Endothelial cell of umbilical vein (primary cell): ENCODE measurements at regions of chr11 and their contacts with region 1.

Region 1: DNA sequence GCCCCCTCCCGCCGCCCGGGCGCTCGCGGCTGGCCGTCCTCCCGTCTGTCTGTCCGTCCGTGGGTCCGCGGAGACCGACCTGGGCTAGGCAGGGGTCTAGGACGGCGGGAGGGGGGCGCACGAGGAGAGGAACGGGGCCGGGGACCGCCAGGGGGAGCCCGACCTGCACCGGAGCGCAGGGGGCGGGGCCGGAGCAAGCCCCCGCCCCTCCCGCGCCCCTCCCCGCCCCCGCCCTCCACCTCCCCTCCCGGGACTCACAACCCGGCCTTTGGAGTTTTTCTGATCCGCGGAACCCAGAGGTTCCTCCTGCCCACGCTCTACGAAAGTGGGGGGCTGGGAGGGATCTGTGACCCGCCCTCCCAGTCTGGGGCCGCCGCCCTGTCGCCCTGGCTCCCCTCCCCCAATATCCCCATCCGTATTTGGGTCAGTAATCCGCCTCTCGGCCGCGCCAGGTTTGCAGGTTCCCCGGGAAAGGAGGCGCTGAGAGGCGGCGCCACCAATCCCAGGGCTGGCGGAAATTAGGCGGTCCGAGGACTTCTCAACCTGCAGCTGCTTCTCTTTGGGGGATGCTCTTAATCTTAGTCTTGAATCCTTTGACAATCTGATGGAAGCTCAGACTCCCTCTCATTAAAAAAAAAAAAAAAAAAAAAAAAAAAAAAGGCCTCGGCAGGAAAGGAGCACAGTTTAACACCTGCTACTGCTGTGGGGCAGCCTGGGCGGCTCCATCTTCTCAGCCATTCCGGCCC is 925 bp upstream of the KCNJ11 start:
- DNase-seq: peak; percentile 43
- H3K4me3 ChIP-seq: peak overlapping the region in 1 of 3 experiments; percentile 39
- H3K27ac ChIP-seq: no peak overlapping the region
- H3K4me1 ChIP-seq: no peaks in the 10 kb centered on the region
- H3K27me3 ChIP-seq: peaks cover 8 to 14% of the 10 kb centered on the region in 2 experiments
- CTCF ChIP-seq: peak; percentile 34 to 73
- POLR2A ChIP-seq: no peak

Region 2: DNA sequence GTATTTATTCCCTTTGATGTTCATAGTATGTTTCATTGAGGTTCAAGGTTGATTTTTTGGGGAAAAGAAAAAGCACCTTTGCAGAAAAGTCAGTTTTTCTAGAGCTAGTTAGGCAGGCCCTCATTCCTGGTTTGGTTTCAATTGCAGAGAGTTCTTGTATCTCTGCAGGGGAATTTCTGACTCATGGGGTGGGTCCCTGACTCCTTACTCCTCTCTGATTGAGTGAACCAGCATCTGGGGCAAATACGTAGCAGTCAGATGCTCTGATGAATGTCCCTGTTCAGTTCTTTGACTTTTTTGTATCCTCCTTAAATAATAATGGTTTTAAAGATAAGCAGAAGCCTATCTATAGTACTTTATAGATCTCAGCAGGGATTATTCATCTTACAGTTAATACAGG is 45.5 kb before region 1 on chr11:
- CTCF ChIA-PET with region 1: no interaction called
- POLR2A ChIA-PET with region 1: no interaction called
- dilution Hi-C with region 1: no loop called
- intact Hi-C with region 1: no loop called
- DNase-seq: no peak
- H3K4me3 ChIP-seq: no peak overlapping the region
- H3K27ac ChIP-seq: no peak overlapping the region
- H3K4me1 ChIP-seq: no peaks in the 10 kb centered on the region
- H3K27me3 ChIP-seq: no peaks in the 10 kb centered on the region
- CTCF ChIP-seq: no peak
- POLR2A ChIP-seq: no peak

Region 3: DNA sequence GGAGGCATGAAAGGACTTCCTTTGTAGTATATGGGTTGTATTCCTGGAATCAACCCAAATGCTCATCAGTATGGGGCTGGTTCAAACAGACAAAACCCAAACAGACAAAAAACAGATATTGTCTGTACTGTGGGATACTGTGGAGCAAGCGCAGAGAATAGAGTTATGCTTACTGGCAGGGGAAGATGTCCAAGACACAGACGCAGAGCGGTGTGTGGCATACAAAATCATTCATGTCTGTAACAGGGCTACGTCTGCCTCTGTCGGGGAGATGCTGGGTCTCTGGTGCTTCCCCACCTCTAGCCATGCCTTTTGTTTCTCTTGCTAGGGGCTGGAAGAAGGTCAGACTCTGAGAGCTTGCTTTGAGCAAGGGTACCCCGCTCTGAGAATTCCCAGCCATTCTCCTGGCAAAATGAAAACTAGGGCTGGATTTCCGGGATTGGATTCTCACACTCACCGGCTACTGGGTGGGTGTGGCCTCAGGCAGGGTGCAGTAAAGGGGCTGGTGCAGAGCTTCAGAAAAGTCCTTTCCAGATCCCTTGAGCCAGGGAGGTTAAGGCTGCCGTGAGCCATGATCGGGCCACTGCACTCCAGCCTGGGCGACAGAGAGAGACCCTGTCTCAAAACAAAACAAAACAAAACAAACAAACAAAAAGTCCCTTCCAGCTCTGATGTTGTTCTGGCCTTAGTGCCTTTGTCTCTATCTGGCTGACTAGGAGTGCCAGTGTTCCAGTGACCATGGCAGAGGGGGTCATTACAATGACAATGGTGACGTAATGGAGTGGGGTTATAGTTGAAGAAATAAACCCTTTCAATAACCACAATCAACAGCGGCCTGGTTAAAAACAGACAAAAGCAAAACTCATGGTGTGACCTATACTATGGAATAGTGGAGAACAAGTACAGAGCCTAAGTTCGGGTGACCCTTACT is 90.2 kb after region 1 on chr11:
- CTCF ChIA-PET with region 1: interaction called, 3 read pairs
- POLR2A ChIA-PET with region 1: no interaction called
- dilution Hi-C with region 1: no loop called
- intact Hi-C with region 1: loop called (anchors 1 kb)
- DNase-seq: peak; percentile 10
- H3K4me3 ChIP-seq: no peak overlapping the region
- H3K27ac ChIP-seq: no peak overlapping the region
- H3K4me1 ChIP-seq: no peaks in the 10 kb centered on the region
- H3K27me3 ChIP-seq: peaks cover 30 to 40% of the 10 kb centered on the region in 2 experiments
- CTCF ChIP-seq: no peak
- POLR2A ChIP-seq: no peak